HEK293 (cell line): ENCODE measurements at regions of chr1 and their contacts with region 1.

Region 1: GRCh38 chr1:113759333-113760101 is at the start of gene PHTF1:
- H3K4me3 ChIP-seq: peak within 1 kb of the TSS; percentile 83
- H3K27ac ChIP-seq: peak within 1 kb of the TSS; percentile 94
- H3K4me1 ChIP-seq: peaks cover 4% of the 10 kb centered on the region; the same call in 1 of the 2 replicates
- CTCF ChIP-seq: peak; percentile 29; the same call in 1 of the 2 replicates

Region 2: DNA sequence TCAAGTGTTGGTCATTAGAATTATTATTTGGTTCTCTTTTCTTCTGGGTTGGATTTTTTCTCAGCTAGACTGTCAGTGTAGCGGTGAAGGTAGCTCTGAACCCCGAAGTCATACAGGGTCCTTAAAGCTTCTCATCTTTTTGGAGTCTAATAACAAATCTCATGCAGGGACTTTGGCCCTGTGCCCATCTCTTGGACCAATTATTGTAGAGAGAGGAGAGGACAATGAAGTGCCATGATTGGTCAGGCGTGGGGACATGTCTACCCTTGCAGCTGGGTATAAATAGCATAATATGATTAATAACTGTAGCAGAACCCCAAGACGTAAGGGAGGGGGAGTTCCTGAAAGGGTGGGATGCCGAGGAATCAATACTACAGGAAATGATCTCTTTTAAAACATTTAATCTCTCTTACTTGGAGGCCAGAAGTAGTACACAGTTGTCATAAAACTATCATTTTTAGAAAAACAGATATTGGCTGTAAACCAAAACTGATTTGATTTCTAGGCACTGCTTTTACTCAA is 360.4 kb before region 1 on chr1:
- CTCF ChIA-PET with region 1: no interaction called
- POLR2A ChIA-PET with region 1: no interaction called
- H3K4me3 ChIP-seq: no peak overlapping the region
- H3K27ac ChIP-seq: no peak overlapping the region
- H3K4me1 ChIP-seq: peaks cover 44% of the 10 kb centered on the region
- CTCF ChIP-seq: no peak

Region 3: GRCh38 chr1:113747376-113747775 is 12.1 kb before region 1 on chr1:
- CTCF ChIA-PET with region 1: no interaction called
- POLR2A ChIA-PET with region 1: interaction called, 11 read pairs
- H3K4me3 ChIP-seq: no peak overlapping the region
- H3K27ac ChIP-seq: no peak overlapping the region
- H3K4me1 ChIP-seq: no peaks in the 10 kb centered on the region
- CTCF ChIP-seq: no peak

Region 4: GRCh38 chr1:113777561-113777960 is 18.0 kb after region 1 on chr1:
- CTCF ChIA-PET with region 1: no interaction called
- POLR2A ChIA-PET with region 1: no interaction called
- H3K4me3 ChIP-seq: no peak overlapping the region
- H3K27ac ChIP-seq: no peak overlapping the region
- H3K4me1 ChIP-seq: no peaks in the 10 kb centered on the region; the same call in 1 of the 2 replicates
- CTCF ChIP-seq: no peak

Region 5: GRCh38 chr1:113811888-113812660 is 52.6 kb after region 1 on chr1 and contains the start of gene RSBN1:
- CTCF ChIA-PET with region 1: interaction called, 9 read pairs
- POLR2A ChIA-PET with region 1: interaction called, 32 read pairs
- H3K4me3 ChIP-seq: peak within 1 kb of the TSS; percentile 90
- H3K27ac ChIP-seq: peak within 1 kb of the TSS; percentile 51
- H3K4me1 ChIP-seq: peaks cover 2% of the 10 kb centered on the region; the same call in 1 of the 2 replicates
- CTCF ChIP-seq: peak; percentile 57